Natural killer cell (primary cell): ENCODE measurements at regions of chr15 and their contacts with region 1.

Region 1: DNA sequence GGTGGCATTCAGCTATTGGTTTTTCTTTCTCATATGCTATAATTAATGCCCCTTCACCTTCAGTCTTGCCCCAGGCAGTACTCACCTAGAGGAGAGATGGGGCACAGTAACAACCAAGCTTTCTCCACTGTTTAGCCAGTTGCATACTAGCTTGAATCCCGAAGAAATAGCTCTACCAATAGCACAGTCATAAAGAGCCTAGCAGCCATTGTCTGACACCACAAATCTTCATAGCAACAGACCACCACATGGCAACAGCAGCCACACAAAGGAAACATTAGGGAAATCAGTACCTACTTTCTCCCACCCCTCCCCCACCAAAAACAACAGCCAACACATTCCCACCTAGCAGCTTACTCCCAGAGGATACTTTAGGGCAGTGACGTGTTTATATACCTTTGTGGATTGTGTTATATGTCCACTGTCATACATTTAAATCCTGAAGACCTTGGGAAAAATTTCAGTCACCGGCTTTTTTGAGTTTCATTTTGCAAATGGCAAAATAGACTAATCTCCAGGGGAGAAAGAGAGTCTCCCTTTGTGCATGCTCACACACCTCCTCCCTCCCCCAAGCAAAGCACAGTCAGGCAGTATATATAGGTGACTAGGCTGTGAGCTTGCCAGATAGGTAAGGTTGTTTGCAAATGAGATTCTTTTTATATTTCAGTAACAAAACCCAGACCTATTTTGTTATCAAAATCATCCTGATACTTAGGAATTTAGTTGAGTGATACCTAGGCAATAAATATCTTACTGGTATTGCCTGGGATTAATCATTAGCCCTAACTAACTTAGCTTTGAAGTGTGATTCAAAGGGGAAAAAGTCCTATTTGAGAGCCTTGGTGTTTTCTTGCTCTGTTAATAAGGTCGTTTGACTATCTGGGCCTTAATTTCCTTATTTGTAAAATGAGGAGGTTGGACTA is 140.6 kb downstream of the RBPMS2 start:
- DNase-seq: peak in 1 of 2 donors; percentile 65
- ATAC-seq: peak; percentile 54 to 62 (median 58)
- H3K4me3 ChIP-seq: no peak overlapping the region
- H3K4me3 Mint-ChIP-seq: peak overlapping the region; percentile 85
- H3K27ac ChIP-seq: peak overlapping the region; percentile 75
- H3K27ac Mint-ChIP-seq: peak overlapping the region; percentile 89 to 95
- H3K4me1 ChIP-seq: peaks cover 50% of the 10 kb centered on the region
- H3K4me1 Mint-ChIP-seq: peaks cover 48 to 49% of the 10 kb centered on the region in 2 donors
- H3K27me3 ChIP-seq: no peaks in the 10 kb centered on the region
- H3K27me3 Mint-ChIP-seq: no peaks in the 10 kb centered on the region
- CTCF ChIP-seq: no peak

Region 2: GRCh38 chr15:63487076-63487757 is 1147.6 kb before region 1 on chr15:
- intact Hi-C with region 1: no loop called
- DNase-seq: peak; percentile 88 to 93
- ATAC-seq: peak; percentile 96 to 100 (median 99)
- H3K4me3 ChIP-seq: no peak overlapping the region
- H3K4me3 Mint-ChIP-seq: peak overlapping the region; percentile 72
- H3K27ac ChIP-seq: no peak overlapping the region
- H3K27ac Mint-ChIP-seq: peak overlapping the region in 1 of 2 donors; percentile 75
- H3K4me1 ChIP-seq: peaks cover 42% of the 10 kb centered on the region
- H3K4me1 Mint-ChIP-seq: peaks cover 17 to 23% of the 10 kb centered on the region in 2 donors
- H3K27me3 ChIP-seq: no peaks in the 10 kb centered on the region
- H3K27me3 Mint-ChIP-seq: no peaks in the 10 kb centered on the region
- CTCF ChIP-seq: peak; percentile 96

Region 3: DNA sequence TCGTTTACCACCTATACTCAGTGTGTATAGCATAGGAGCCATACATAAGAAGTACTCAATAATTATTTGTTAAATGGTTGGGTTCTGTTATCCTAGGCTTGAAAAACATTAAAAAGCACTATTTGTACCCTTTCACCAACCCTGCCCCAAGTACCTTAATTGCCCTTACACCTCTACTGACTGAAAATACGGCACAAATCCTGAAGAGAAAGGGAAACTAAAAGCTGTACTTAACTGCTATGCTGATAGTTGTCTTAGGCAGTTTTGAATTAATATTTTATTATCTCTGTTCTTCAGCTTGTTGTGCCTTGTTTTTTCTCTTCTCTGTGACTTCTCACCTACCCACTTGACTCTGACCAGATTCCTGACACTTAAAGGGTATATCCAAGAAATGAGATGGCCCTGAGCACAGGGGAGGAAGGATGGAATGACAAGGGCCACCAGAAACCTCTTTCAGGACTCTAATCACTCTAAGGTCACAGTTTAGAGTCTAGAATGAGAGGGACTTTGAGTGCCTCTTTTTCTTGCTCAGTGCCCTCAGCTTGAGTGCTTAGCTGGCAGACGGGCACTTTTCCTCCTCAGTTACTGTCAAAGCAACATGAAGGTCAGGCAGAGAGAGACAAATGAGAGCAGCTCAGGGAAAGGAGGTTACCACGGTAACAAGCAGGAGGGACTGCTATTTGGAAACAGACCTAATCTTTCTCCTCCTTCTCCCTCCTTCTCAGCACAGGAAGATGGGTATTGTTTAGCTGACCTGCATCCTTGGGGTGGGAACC is 37.9 kb before region 1 on chr15:
- intact Hi-C with region 1: loop called (anchors 5 kb)
- DNase-seq: peak; percentile 18 to 67
- ATAC-seq: peak; percentile 78 to 83 (median 79)
- H3K4me3 ChIP-seq: peak overlapping the region; percentile 12
- H3K4me3 Mint-ChIP-seq: peak overlapping the region; percentile 94
- H3K27ac ChIP-seq: peak overlapping the region; percentile 65
- H3K27ac Mint-ChIP-seq: peak overlapping the region; percentile 95 to 96
- H3K4me1 ChIP-seq: peaks cover 23% of the 10 kb centered on the region
- H3K4me1 Mint-ChIP-seq: peaks cover 28 to 29% of the 10 kb centered on the region in 2 donors
- H3K27me3 ChIP-seq: no peaks in the 10 kb centered on the region
- H3K27me3 Mint-ChIP-seq: no peaks in the 10 kb centered on the region
- CTCF ChIP-seq: no peak

Region 4: DNA sequence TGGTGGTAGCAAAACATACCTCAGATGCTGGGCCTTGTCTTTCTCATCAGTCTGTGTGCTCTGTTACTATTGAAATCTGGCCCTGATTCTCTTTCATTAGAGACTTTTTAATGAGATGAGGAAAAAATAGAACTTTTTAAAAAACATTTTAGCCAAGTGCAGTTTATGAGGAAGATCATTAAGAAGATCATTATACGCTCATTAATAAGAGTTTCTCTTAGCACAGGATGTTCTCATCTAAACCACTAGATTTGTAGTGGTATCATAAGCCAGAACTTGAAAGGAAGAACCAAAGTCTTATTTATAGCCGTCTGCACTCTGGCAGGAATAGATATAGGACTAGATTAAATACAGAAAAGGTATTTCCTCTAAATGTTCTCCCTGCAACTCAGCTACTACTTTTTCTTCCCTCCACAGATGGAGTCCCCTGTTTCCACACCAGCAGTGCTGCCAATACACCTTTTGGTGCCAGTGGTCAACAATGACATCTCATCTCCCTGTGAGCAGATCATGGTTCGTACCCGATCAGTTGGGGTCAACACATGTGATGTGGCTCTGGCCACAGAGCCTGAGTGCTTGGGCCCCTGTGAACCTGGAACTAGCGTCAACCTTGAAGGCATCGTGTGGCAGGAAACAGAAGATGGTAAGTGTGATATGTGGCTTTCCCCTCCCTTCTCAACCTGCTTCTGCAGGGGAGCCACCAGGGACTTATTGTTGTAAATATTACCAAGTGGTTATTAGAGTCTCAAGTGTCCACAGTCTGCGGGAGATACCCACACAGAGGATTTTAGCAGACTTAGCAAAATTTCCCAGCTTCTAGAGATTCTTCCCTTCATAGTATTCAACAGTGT is 12.2 kb before region 1 on chr15:
- intact Hi-C with region 1: loop called (anchors 1 kb)
- DNase-seq: peak; percentile 62 to 82
- ATAC-seq: peak; percentile 80 to 92 (median 91)
- H3K4me3 ChIP-seq: no peak overlapping the region
- H3K4me3 Mint-ChIP-seq: peak overlapping the region; percentile 68
- H3K27ac ChIP-seq: peak overlapping the region; percentile 74
- H3K27ac Mint-ChIP-seq: peak overlapping the region; percentile 86 to 88
- H3K4me1 ChIP-seq: peaks cover 48% of the 10 kb centered on the region
- H3K4me1 Mint-ChIP-seq: peaks cover 80 to 89% of the 10 kb centered on the region in 2 donors
- H3K27me3 ChIP-seq: no peaks in the 10 kb centered on the region
- H3K27me3 Mint-ChIP-seq: no peaks in the 10 kb centered on the region
- CTCF ChIP-seq: no peak

Region 5: DNA sequence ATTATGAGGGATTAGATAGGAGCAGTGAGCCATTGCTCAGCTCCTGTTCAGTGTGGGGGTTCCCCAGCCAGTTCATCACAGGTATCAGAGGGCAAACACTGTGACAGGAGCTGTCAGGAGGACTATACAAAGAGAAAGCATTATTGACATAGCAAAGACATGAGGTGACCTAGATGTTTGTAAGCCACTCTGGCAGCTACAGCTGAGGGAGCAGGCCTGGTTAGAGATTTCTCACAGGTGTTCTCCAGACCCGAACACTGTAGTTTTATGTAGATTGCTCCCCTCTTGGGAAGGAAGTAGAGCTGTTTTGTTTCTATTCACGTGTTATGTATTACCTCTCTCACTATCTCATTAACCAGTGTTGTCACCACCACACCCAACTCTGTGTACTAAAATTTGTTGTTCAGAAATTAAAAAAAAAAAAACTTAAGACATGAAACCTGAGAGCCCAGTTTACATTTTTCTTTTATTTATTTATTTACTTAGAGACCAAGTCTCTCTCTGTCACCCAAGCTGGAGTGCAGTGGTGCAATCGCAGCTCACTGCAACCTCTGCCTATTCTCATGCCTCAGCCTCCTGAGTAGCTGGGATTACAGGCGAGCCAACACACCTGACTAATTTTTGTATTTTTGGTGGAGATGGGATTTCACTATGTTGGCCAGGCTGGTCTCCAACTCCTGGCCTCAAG is 16.9 kb after region 1 on chr15:
- intact Hi-C with region 1: loop called (anchors 2 kb)
- DNase-seq: peak in 1 of 2 donors; percentile 79
- ATAC-seq: peak; percentile 85 to 95 (median 92)
- H3K4me3 ChIP-seq: no peak overlapping the region
- H3K4me3 Mint-ChIP-seq: peak overlapping the region; percentile 55
- H3K27ac ChIP-seq: peak overlapping the region; percentile 54
- H3K27ac Mint-ChIP-seq: peak overlapping the region; percentile 78 to 87
- H3K4me1 ChIP-seq: peaks cover 14% of the 10 kb centered on the region
- H3K4me1 Mint-ChIP-seq: peaks cover 21% of the 10 kb centered on the region in 2 donors
- H3K27me3 ChIP-seq: no peaks in the 10 kb centered on the region
- H3K27me3 Mint-ChIP-seq: no peaks in the 10 kb centered on the region
- CTCF ChIP-seq: no peak

Region 6: DNA sequence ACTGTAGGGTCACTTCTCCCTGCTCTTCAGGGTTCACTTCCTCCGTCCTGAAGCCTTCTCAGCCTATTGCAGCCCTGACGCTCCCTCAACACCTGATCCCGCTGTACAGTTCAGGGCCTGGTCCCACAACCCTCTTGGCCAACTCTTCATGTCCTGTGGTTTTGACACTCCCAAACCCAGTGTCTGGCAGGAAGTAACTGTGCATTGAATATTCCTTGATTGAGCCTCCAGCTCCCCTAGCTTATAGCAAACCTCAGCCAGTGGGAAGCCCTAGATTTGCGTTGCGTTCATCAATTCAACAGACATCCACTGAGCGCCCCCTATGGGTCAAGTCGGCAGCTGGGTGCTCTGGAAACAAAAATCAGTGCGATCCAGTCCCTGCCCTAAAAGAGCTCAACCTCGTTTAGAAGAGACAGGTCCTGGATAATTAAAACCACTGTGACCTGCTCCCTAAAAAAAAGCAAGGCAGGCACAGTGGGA is 466.6 kb after region 1 on chr15:
- intact Hi-C with region 1: no loop called
- DNase-seq: peak in 1 of 2 donors; percentile 62
- ATAC-seq: peak in 1 of 3 donors; percentile 41
- H3K4me3 ChIP-seq: no peak overlapping the region
- H3K4me3 Mint-ChIP-seq: no peak overlapping the region
- H3K27ac ChIP-seq: no peak overlapping the region
- H3K27ac Mint-ChIP-seq: no peak overlapping the region
- H3K4me1 ChIP-seq: peaks cover 4% of the 10 kb centered on the region
- H3K4me1 Mint-ChIP-seq: peaks cover 9 to 22% of the 10 kb centered on the region in 2 donors
- H3K27me3 ChIP-seq: no peaks in the 10 kb centered on the region
- H3K27me3 Mint-ChIP-seq: no peaks in the 10 kb centered on the region
- CTCF ChIP-seq: peak; percentile 33